PC-9 (cell line): ENCODE measurements at regions of chr18 and their contacts with region 1.

Region 1: GRCh38 chr18:49794743-49795142 is 18.6 kb downstream of the ACAA2 start:
- DNase-seq: no peak
- H3K4me3 ChIP-seq: no peak overlapping the region
- H3K27ac ChIP-seq: no peak overlapping the region
- H3K4me1 ChIP-seq: no peaks in the 10 kb centered on the region
- H3K27me3 ChIP-seq: no peaks in the 10 kb centered on the region
- CTCF ChIP-seq: no peak

Region 2: DNA sequence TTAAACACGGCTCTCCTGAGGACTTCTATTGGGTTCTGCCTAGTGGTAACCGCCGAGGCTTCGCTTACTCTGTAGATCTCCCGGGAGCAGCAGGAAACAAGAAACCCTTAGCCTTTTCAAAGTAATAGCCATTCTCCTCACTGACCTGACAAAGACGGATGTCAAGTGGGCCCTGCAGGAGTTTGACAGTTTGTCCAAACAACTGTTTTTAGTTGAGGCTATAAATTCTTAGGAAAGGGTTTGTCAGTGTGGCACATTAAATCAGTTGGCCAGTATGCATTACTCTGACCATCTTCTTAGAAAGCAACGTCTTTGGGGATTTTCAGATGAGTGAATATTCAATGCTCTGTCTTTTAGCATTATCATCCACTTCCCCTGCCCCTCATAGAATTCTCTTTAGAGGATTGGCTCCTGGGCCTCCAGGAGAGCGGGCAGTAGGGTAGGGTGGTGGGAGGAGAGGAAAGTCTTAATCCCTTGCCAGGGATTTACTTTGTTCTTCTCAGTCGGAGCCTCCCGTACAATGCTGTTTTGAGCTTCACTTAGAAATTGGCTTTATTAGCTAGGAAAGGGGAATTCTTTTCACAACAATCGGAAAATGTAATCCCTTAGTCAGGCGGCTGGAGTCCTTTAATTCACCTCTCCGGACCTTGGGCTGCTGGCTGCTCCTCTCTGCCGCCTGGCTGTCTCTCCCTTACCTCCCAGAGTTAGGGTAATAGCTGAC is 294.4 kb before region 1 on chr18:
- CTCF ChIA-PET with region 1: interaction called, 11 read pairs
- POLR2A ChIA-PET with region 1: no interaction called
- intact Hi-C with region 1: no loop called
- DNase-seq: no peak
- H3K4me3 ChIP-seq: no peak overlapping the region
- H3K27ac ChIP-seq: no peak overlapping the region
- H3K4me1 ChIP-seq: no peaks in the 10 kb centered on the region
- H3K27me3 ChIP-seq: no peaks in the 10 kb centered on the region
- CTCF ChIP-seq: no peak

Region 3: GRCh38 chr18:49690307-49690706 is 104.4 kb before region 1 on chr18:
- CTCF ChIA-PET with region 1: no interaction called
- POLR2A ChIA-PET with region 1: no interaction called
- intact Hi-C with region 1: no loop called
- DNase-seq: peak; percentile 3 to 91
- H3K4me3 ChIP-seq: no peak overlapping the region; the same call in 1 of the 2 replicates
- H3K27ac ChIP-seq: peak overlapping the region; percentile 94
- H3K4me1 ChIP-seq: peaks cover 39% of the 10 kb centered on the region
- H3K27me3 ChIP-seq: no peaks in the 10 kb centered on the region
- CTCF ChIP-seq: no peak